A673 (cell line): ENCODE measurements at regions of chr5 and their contacts with region 1.

Region 1: GRCh38 chr5:17189381-17190036 is 27.9 kb upstream of the BASP1 start:
- DNase-seq: peak; percentile 93
- H3K4me3 ChIP-seq: no peak overlapping the region
- H3K27ac ChIP-seq: peak overlapping the region; percentile 79
- H3K4me1 ChIP-seq: peaks cover 34% of the 10 kb centered on the region
- H3K27me3 ChIP-seq: no peaks in the 10 kb centered on the region
- CTCF ChIP-seq: peak; percentile 95

Region 2: DNA sequence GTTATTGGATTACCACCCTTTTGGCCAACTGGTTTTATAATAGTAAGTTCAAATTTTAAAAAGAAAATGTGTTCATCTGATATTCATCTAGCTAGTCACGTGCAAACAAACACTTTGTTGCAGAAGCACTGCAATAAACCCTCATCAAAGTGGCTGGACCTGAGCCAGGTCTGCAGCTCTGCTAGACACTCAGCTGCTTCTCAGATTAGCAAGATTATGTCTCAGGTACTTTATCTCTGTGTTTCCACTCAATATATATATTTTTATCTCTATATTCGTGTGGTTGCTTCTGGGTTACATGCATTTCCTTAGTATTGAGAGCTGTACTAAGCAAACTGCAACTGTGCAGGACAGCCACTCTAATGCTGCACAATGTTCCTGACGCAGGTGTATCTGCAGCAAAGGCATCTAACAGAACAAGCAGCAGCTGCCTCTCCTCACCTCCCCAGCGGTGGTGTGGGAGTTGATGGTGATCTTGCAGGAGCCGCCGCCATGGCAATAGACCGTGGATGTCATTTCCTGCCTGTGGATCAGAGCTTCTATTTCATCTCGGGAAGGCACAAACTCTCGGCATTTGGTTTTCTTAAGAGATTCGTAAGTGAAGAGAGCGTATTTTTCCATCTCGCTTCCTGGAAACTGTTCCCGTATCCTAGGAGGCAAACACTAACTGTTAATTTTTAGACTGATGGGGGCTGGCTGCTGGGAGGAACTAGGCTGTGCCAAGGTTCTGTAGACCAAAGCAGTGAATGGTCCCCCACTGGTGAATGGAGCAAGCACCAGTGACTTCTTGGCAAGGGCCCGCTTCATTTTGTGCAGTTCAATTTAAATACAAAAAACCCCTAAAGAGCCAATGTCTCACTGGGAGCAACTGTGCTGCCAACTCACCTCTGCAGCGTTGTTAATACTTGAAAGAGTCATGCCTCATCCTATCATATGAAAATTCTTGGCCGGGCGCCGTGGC is 516.0 kb before region 1 on chr5:
- CTCF ChIA-PET with region 1: no interaction called
- POLR2A ChIA-PET with region 1: no interaction called
- intact Hi-C with region 1: loop called (anchors 5 kb)
- DNase-seq: no peak
- H3K4me3 ChIP-seq: no peak overlapping the region
- H3K27ac ChIP-seq: no peak overlapping the region
- H3K4me1 ChIP-seq: peaks cover 13% of the 10 kb centered on the region
- H3K27me3 ChIP-seq: no peaks in the 10 kb centered on the region
- CTCF ChIP-seq: no peak

Region 3: DNA sequence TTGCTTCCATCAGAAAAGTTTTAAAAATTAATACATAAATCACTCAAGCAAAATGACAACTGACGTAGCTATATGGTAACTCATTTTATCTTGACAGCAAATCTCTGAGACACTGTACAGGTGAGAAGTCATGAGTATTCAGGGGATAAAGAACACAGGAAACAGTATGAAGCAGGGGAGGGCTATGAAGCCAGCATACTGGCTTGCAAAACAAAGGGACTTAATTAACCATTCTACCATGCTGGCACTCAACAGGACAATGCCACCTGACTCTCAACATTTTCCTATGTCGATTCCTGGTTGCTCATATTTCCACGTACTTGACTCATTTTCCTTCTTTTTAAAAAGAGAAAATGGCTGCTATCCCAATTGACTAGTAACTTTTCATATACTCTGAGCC is 421.3 kb before region 1 on chr5:
- CTCF ChIA-PET with region 1: no interaction called
- POLR2A ChIA-PET with region 1: interaction called, 20 read pairs
- intact Hi-C with region 1: no loop called
- DNase-seq: no peak
- H3K4me3 ChIP-seq: no peak overlapping the region
- H3K27ac ChIP-seq: no peak overlapping the region
- H3K4me1 ChIP-seq: no peaks in the 10 kb centered on the region
- H3K27me3 ChIP-seq: no peaks in the 10 kb centered on the region
- CTCF ChIP-seq: no peak

Region 4: GRCh38 chr5:16934123-16934522 is 255.4 kb before region 1 on chr5:
- CTCF ChIA-PET with region 1: no interaction called
- POLR2A ChIA-PET with region 1: interaction called, 5 read pairs
- intact Hi-C with region 1: loop called (anchors 2 kb)
- DNase-seq: peak; percentile 93
- H3K4me3 ChIP-seq: peak overlapping the region; percentile 90
- H3K27ac ChIP-seq: peak overlapping the region; percentile 95
- H3K4me1 ChIP-seq: peaks cover 62% of the 10 kb centered on the region
- H3K27me3 ChIP-seq: no peaks in the 10 kb centered on the region
- CTCF ChIP-seq: peak; percentile 89

Region 5: DNA sequence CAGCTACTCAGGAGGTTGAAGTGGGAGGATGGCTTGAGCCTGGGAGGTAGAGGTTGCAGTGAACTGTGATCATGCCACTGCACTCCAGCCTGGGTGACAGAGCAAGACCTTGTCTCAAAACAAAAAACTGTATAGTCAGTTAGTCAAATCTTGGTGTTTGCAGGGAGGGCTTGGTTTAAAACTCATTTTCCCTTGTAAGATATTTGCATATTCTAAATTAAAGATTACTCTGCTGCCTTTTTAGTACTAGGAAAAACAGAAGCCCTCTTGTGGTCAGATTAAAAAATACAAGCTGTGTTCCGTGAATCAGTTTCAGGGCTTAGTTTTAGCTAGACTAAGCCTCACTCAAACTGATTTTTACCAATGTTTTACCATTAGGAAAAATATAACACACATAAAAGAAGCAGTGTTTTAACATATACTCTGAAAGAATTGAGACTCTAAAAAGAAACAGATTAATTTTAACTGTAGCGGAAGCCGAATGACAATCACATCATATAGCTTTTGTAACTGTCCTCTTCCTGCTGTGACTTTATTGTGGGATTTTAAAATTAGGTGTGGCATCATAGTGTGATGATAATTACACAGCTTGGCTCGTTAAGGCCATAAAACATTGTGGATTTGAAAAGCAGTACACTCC is 56.9 kb before region 1 on chr5:
- CTCF ChIA-PET with region 1: interaction called, 9 read pairs
- POLR2A ChIA-PET with region 1: no interaction called
- intact Hi-C with region 1: loop called (anchors 2 kb)
- DNase-seq: peak; percentile 95
- H3K4me3 ChIP-seq: no peak overlapping the region
- H3K27ac ChIP-seq: peak overlapping the region; percentile 87
- H3K4me1 ChIP-seq: peaks cover 21% of the 10 kb centered on the region
- H3K27me3 ChIP-seq: no peaks in the 10 kb centered on the region
- CTCF ChIP-seq: peak; percentile 74